Activated B cell treated with CpG ODN at 0.5 μM for 24 hours (primary cell): ENCODE measurements at regions of chr6 and their contacts with region 1.

Region 1: DNA sequence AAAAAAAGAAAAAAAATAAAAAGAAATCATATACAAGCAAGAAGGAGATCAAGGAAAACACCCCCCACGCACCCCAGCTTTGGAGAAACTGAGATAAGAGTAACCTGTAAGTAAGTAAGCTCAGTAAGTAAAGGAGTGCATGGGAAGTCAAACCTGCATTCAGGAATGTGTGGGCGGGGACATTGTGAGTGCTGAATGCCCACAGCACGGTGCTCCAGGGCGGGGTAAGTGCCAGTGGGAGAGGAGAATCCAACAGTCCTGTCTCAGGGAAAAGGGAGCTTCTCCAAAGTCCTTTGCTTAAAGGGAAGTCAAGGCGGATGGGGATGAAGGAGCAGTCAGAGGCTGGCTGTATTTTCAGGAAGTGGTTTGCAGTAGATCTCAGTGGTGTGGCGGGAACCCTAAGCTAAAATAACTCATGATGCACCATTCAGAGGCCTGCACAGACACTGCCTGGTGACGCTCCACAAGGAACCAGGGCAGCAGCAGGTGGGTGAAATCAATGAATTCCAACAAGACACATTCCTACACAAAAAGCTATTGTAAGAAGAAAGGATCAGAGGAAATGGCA is 368.0 kb downstream of the QKI start:
- DNase-seq: no peak
- ATAC-seq: no peak
- H3K4me3 Mint-ChIP-seq: peak overlapping the region; percentile 40
- H3K27ac Mint-ChIP-seq: no peak overlapping the region
- H3K4me1 Mint-ChIP-seq: peaks cover 12% of the 10 kb centered on the region
- H3K27me3 Mint-ChIP-seq: no peaks in the 10 kb centered on the region
- CTCF ChIP-seq: no peak

Region 2: GRCh38 chr6:163579880-163580295 is 202.6 kb before region 1 on chr6:
- CTCF ChIA-PET with region 1: no interaction called
- POLR2A ChIA-PET with region 1: no interaction called
- intact Hi-C with region 1: loop called (anchors 10 kb)
- DNase-seq: no peak
- ATAC-seq: no peak
- H3K4me3 Mint-ChIP-seq: no peak overlapping the region
- H3K27ac Mint-ChIP-seq: no peak overlapping the region
- H3K4me1 Mint-ChIP-seq: no peaks in the 10 kb centered on the region
- H3K27me3 Mint-ChIP-seq: no peaks in the 10 kb centered on the region
- CTCF ChIP-seq: no peak

Region 3: DNA sequence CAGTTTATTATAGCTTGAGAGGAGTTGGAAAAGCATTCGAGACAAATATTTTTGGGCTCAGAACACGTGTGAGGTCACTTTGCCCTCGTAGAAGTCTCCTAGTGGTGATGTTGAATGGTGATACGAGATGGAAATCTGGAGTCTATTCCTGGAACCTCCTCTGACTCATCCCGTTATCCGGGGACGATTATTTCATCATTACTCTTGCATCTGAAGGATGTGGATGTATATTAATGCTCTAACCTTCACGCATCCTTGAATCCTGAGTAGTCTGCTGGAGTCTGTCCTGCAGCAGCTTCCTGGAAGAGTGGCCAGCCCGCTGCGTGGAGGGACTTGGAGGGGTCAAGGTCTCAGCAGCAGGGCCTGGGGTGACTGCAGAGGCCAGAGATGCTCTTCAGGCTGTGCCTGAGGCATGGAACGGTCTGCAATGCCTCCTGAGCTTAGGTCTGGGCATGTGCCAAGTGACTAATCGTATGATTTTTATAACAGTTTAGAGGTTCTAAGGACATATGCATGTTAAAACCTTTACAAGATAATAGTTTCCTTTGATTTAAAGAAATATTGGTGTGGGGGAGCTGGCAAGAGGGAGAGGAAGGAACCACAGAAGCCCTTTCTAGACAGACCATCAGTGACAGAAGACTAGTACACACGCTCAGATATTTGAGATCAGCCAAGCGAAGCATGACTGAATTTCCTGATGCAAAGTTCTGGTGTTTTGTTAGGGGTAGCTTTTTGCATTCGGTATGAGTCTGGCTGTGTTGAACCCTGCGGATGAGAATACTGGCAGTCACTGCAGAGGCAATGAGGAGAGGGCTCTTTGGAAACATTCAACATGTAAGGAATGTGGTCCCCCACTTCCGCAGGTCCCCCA is 32.2 kb after region 1 on chr6:
- CTCF ChIA-PET with region 1: no interaction called
- POLR2A ChIA-PET with region 1: no interaction called
- intact Hi-C with region 1: no loop called
- DNase-seq: no peak
- ATAC-seq: peak; percentile 45
- H3K4me3 Mint-ChIP-seq: peak overlapping the region; percentile 63
- H3K27ac Mint-ChIP-seq: no peak overlapping the region
- H3K4me1 Mint-ChIP-seq: peaks cover 32% of the 10 kb centered on the region
- H3K27me3 Mint-ChIP-seq: peaks cover 2% of the 10 kb centered on the region
- CTCF ChIP-seq: no peak